ENCODE measurements at regions of chr12 and their contacts with region 1.

Region 1: GRCh38 chr12:12008931-12009611 is 61.7 kb upstream of the BCL2L14 start:
- DNase-seq: peak; percentile 84
- ATAC-seq: peak; percentile 64
- H3K4me3 Mint-ChIP-seq: peak overlapping the region; percentile 71
- H3K27ac Mint-ChIP-seq: peak overlapping the region; percentile 96
- H3K4me1 Mint-ChIP-seq: peaks cover 77% of the 10 kb centered on the region
- H3K27me3 Mint-ChIP-seq: no peaks in the 10 kb centered on the region

Region 2: DNA sequence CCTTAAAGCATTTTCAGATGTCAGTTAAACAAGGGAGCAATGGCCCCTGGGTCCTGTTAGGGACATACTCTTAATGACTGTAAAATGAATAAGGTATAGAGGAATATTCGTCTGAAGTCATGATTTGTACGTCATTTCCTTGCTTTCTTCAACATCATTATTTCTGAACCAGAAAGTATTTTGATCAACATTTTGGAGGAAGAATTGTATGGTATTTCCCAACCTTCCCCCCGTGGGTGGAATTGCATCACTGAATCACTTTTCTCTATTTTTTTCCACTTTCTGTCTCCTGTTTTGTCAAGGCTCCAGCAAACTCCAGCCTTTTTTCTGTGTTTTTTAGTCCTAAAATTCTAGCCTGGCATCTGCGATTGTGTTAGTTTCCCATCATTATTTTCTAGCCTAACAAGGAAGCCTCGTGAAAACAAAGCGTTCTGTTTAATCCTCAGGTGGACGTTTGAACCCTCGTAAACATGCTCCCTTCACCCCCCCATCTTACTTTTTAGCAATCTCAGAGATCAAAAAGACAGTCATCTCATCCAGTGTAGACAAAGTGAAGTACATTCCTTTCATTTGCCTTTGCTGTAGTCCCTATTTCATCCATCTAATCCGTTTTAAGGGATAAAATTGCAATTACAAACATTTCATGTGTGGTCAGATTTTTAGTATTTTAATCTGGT is 297.3 kb before region 1 on chr12:
- CTCF ChIA-PET with region 1: no interaction called
- POLR2A ChIA-PET with region 1: no interaction called
- intact Hi-C with region 1: loop called in 1 of 2 experiments (anchors 5 kb)
- DNase-seq: no peak
- ATAC-seq: no peak
- H3K4me3 Mint-ChIP-seq: no peak overlapping the region
- H3K27ac Mint-ChIP-seq: peak overlapping the region; percentile 72
- H3K4me1 Mint-ChIP-seq: peaks cover 76% of the 10 kb centered on the region
- H3K27me3 Mint-ChIP-seq: no peaks in the 10 kb centered on the region

Region 3: DNA sequence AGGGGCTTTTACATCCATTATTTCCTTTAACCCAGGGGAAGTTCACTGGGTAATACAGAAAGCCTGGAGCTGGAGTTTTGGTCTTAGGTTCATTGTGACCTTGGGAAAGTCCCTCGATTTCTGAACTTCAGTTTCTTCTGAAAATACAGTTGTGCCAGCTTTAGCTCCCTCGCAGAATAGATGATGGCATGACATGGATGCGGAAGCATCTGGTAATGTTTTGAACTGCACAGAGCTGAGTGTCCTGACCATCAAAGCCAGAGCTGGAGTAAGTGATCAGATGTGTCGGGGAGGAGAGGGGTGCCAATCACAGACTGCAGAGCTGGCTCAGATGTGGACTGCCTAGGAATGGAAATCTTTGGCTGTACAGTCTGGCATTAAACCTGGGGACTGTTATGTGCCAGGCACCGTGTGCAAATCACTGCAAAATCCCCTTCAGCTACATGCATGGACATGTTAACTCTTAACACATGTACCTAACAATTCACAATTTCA is 178.7 kb before region 1 on chr12:
- CTCF ChIA-PET with region 1: interaction called, 6 read pairs
- POLR2A ChIA-PET with region 1: interaction called, 15 read pairs
- intact Hi-C with region 1: no loop called
- DNase-seq: peak; percentile 24
- ATAC-seq: peak; percentile 42
- H3K4me3 Mint-ChIP-seq: no peak overlapping the region
- H3K27ac Mint-ChIP-seq: no peak overlapping the region
- H3K4me1 Mint-ChIP-seq: peaks cover 55% of the 10 kb centered on the region
- H3K27me3 Mint-ChIP-seq: no peaks in the 10 kb centered on the region

Region 4: GRCh38 chr12:11922361-11922760 is 86.7 kb before region 1 on chr12:
- CTCF ChIA-PET with region 1: no interaction called
- POLR2A ChIA-PET with region 1: no interaction called
- intact Hi-C with region 1: no loop called
- DNase-seq: no peak
- ATAC-seq: no peak
- H3K4me3 Mint-ChIP-seq: no peak overlapping the region
- H3K27ac Mint-ChIP-seq: no peak overlapping the region
- H3K4me1 Mint-ChIP-seq: peaks cover 12% of the 10 kb centered on the region
- H3K27me3 Mint-ChIP-seq: no peaks in the 10 kb centered on the region

Region 5: GRCh38 chr12:11958221-11959091 is 50.6 kb before region 1 on chr12:
- CTCF ChIA-PET with region 1: interaction called, 3 read pairs
- POLR2A ChIA-PET with region 1: no interaction called
- intact Hi-C with region 1: loop called (anchors 1 kb)
- DNase-seq: peak; percentile 78
- ATAC-seq: peak; percentile 97
- H3K4me3 Mint-ChIP-seq: peak overlapping the region; percentile 11
- H3K27ac Mint-ChIP-seq: peak overlapping the region; percentile 86
- H3K4me1 Mint-ChIP-seq: peaks cover 36% of the 10 kb centered on the region
- H3K27me3 Mint-ChIP-seq: peaks cover 11% of the 10 kb centered on the region

Region 6: DNA sequence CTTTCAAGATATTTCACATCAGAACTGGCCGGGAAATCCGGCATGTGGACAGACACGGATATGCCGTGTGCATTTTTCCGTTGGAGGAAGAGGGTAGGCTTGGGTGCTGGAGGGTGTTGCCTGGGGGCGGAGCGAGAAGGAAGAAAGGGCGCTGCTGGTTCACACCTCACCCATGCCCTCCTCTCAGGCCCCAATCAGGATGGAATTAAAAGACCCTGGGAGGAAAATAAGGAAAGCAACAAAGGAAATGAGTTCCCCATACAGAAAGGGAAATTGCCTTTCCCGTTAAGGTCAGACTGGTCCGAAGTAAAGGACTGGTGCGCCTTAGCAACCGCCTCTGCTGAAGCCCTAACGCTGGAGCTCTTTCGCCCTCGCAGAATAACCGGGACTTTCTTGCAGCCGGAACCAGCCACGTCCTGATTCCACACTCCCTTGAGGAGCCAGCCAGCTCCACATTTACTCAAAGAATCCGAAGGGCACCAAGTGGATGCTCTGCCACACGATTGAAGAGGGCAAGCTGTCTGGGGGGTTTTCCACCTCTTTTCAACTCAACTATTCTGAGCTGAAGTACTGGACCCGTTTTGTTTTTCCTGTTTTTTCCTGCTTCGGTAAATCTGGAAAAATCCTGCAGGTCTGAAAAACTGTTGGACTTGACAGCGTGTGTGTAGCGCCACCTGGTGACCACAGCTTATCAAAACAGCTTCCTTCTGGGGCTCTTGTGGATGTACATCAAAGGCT is 23.9 kb after region 1 on chr12:
- CTCF ChIA-PET with region 1: interaction called, 51 read pairs
- POLR2A ChIA-PET with region 1: interaction called, 31 read pairs
- intact Hi-C with region 1: loop called (anchors 1 kb)
- DNase-seq: peak; percentile 78
- ATAC-seq: peak; percentile 73
- H3K4me3 Mint-ChIP-seq: peak overlapping the region; percentile 60
- H3K27ac Mint-ChIP-seq: peak overlapping the region; percentile 91
- H3K4me1 Mint-ChIP-seq: peaks cover 46% of the 10 kb centered on the region
- H3K27me3 Mint-ChIP-seq: no peaks in the 10 kb centered on the region

Region 7: DNA sequence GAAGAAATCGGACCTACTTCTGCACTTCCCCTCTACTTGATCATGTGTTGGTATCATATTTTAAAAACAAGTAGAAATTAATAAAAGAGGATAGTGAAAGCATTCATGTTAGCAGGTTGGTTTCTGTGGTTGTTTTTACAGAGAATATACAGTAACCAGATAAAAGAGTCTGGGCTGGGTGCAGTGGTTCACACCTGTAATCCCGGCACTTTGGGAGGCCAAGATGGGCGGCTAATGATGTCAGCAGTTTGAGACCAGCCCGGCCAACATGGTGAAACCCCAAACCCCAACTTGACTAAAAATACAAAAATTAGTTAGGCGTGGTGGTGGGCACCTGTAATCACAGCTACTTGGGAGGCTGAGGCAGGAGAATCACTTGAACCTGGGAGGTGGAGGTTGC is 201.9 kb after region 1 on chr12:
- CTCF ChIA-PET with region 1: no interaction called
- POLR2A ChIA-PET with region 1: no interaction called
- intact Hi-C with region 1: no loop called
- DNase-seq: peak; percentile 51
- ATAC-seq: no peak
- H3K4me3 Mint-ChIP-seq: no peak overlapping the region
- H3K27ac Mint-ChIP-seq: no peak overlapping the region
- H3K4me1 Mint-ChIP-seq: peaks cover 27% of the 10 kb centered on the region
- H3K27me3 Mint-ChIP-seq: peaks cover 2% of the 10 kb centered on the region

Region 8: DNA sequence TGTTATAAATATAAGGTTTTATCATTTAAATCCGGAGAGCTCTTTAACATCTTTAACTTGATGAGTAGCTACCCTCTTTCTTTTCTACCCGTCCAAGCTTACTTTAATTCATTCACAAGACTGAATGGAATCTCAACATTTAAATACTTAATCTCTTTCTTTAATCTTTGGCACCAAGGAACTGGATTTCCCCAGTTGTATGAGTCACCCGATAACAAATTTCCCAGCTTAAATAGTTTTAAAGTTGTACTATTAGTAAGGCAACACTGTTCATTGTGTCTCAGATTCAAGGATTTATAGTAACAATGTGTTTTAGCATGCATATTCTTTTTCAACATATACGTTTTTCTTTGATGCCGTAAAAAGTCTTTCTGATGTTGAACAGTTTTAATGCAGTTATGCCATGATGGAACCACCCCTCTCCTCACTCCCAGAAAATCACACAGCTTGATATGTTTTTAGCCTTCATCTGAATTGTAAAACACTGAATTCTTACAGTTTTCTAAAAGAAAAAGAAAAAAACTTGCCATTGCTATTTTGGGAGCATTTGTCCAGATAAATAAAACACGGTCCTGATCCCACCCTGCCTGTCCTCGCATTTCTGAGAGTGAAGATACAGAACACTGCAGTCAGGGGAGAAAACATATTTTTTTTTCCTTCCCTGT is 273.8 kb after region 1 on chr12:
- CTCF ChIA-PET with region 1: no interaction called
- POLR2A ChIA-PET with region 1: no interaction called
- intact Hi-C with region 1: no loop called
- DNase-seq: no peak
- ATAC-seq: no peak
- H3K4me3 Mint-ChIP-seq: no peak overlapping the region
- H3K27ac Mint-ChIP-seq: no peak overlapping the region
- H3K4me1 Mint-ChIP-seq: peaks cover 8% of the 10 kb centered on the region
- H3K27me3 Mint-ChIP-seq: peaks cover 2% of the 10 kb centered on the region

Region 9: DNA sequence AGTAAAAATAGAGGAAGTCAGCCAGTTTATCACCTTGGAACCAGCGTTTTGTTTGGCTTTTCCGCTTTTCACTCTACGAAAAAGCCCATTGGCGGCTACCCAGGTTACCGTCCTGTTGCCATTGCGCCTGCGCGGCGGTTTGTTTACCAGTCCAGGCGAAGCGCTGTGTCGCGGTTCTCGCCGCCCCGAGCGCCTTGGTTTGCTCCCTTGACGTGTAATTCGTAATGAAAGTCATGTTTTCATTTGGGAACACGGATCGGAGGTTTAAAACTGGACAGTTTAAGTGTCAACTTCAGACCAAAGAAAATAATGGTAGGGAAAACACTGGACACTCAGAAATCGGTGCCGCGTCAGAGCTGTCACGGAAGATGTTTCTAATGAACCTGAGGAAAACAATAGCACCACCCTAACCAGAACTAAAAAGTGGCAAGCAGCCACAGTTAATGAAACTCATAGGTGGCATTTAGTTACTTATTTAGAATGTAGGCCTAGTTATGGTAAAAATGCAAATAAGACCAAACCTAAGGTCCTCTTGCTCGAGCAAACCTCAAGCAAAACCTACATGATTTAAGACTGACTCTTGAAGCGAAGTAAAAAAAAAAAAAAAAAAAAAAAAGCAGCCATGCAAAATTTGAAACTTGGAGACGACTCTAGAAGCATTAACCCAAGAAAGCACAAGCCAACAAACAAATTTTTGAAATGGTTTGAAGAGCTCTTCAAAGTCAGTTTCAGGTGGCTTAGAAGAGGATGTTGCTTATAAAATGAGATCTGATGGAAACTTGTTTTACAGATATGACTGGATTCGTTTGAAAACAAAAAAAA is 687.7 kb after region 1 on chr12:
- CTCF ChIA-PET with region 1: no interaction called
- POLR2A ChIA-PET with region 1: interaction called, 5 read pairs
- intact Hi-C with region 1: loop called (anchors 2 to 5 kb)
- DNase-seq: peak; percentile 94
- ATAC-seq: peak; percentile 80
- H3K4me3 Mint-ChIP-seq: peak overlapping the region; percentile 83
- H3K27ac Mint-ChIP-seq: peak overlapping the region; percentile 99
- H3K4me1 Mint-ChIP-seq: peaks cover 53% of the 10 kb centered on the region
- H3K27me3 Mint-ChIP-seq: no peaks in the 10 kb centered on the region